HCT116 (cell line): ENCODE measurements at regions of chr11 and their contacts with region 1.

Region 1: DNA sequence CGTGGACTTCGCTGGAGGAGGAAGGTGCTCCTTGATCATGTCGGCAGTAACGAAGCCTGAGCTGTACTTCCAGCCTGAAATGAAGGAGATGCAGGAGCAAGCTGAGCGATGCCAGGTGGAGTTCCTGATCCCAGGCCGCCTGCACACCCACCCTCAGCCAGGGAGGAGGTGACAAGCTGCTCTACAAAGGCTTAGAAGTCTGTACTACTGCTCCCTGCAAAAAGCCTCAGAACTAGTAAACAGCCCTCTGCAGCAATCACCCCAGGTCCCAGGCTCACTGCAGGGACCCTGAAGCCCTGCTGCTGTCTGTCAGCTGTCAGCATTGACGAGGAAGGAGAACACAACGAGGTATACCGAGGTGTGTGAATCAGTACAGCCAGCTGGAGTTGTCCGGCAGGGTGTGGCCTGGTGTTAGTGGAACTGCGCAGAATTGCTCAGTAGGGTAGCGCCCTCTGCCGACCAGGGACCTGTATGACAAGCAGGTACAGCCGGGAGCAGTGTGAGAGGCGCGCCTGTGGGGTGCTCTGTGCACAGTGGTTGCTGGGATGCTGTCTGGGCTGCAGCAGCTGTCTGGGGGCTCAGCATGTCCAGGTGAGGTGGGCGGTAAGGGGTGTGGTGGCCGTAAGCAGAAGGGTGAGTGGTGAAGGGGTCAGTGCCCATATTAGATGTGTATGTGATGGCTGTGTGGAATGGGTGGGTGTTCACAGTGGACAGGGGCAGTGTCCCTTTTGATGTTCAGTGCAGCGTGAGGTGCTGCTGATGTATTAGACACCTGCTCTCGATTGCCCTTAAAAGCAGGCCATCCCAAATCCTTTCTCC is 7.6 kb downstream of the CYB5R2 start:
- DNase-seq: peak; percentile 67
- ATAC-seq: peak; percentile 100
- H3K4me3 ChIP-seq: no peak overlapping the region
- H3K27ac ChIP-seq: no peak overlapping the region
- H3K4me1 ChIP-seq: peaks cover 2 to 4% of the 10 kb centered on the region in 2 experiments; a peak in 2 of 4 replicates
- H3K27me3 ChIP-seq: no peaks in the 10 kb centered on the region
- CTCF ChIP-seq: peak; percentile 84 to 93 (median 90)
- POLR2A ChIP-seq: no peak
- RAD21 ChIP-seq: peak; percentile 90

Region 2: GRCh38 chr11:7098235-7098832 is 567.3 kb before region 1 on chr11:
- CTCF ChIA-PET with region 1: interaction called, 4 read pairs
- POLR2A ChIA-PET with region 1: no interaction called
- RAD21 ChIA-PET with region 1: no interaction called
- intact Hi-C with region 1: loop called (anchors 5 kb)
- DNase-seq: peak; percentile 50
- ATAC-seq: peak; percentile 91
- H3K4me3 ChIP-seq: no peak overlapping the region
- H3K27ac ChIP-seq: no peak overlapping the region
- H3K4me1 ChIP-seq: no peaks in the 10 kb centered on the region
- H3K27me3 ChIP-seq: peaks cover 59% of the 10 kb centered on the region
- CTCF ChIP-seq: peak; percentile 46 to 74 (median 72)
- POLR2A ChIP-seq: no peak
- RAD21 ChIP-seq: peak; percentile 91

Region 3: DNA sequence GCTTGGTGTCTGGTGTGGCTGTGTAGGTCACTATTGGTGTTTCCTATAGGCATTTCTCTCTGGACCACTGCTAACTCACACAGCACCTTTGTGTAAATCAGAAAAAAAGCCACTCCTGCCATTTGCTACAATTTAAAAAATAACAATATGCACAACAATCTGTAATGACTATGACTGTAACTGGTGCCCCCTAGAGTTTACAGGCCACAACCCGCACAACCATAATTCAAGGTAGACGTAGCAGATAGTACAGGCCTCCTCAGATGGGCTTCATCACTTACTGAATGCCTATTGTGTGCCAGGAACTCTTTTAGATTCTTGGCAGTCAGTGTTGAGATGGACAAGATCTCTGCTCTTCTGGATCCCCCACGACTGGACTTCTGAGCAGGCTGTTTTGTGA is 366.3 kb before region 1 on chr11:
- CTCF ChIA-PET with region 1: no interaction called
- POLR2A ChIA-PET with region 1: no interaction called
- RAD21 ChIA-PET with region 1: no interaction called
- intact Hi-C with region 1: no loop called
- DNase-seq: no peak
- ATAC-seq: peak; percentile 50
- H3K4me3 ChIP-seq: no peak overlapping the region
- H3K27ac ChIP-seq: no peak overlapping the region
- H3K4me1 ChIP-seq: no peaks in the 10 kb centered on the region
- H3K27me3 ChIP-seq: no peaks in the 10 kb centered on the region; the same call in 1 of the 2 replicates
- CTCF ChIP-seq: peak in 1 of 3 experiments; percentile 25; a peak in 1 of 6 replicates
- POLR2A ChIP-seq: no peak
- RAD21 ChIP-seq: no peak

Region 4: GRCh38 chr11:7353100-7353499 is 312.6 kb before region 1 on chr11:
- CTCF ChIA-PET with region 1: interaction called, 13 read pairs
- POLR2A ChIA-PET with region 1: no interaction called
- RAD21 ChIA-PET with region 1: no interaction called
- intact Hi-C with region 1: loop called (anchors 5 kb)
- DNase-seq: peak; percentile 22
- ATAC-seq: peak; percentile 85
- H3K4me3 ChIP-seq: no peak overlapping the region
- H3K27ac ChIP-seq: no peak overlapping the region
- H3K4me1 ChIP-seq: no peaks in the 10 kb centered on the region
- H3K27me3 ChIP-seq: peaks cover 55% of the 10 kb centered on the region
- CTCF ChIP-seq: peak; percentile 49 to 63 (median 57); a peak in 5 of 6 replicates
- POLR2A ChIP-seq: no peak
- RAD21 ChIP-seq: peak; percentile 53

Region 5: DNA sequence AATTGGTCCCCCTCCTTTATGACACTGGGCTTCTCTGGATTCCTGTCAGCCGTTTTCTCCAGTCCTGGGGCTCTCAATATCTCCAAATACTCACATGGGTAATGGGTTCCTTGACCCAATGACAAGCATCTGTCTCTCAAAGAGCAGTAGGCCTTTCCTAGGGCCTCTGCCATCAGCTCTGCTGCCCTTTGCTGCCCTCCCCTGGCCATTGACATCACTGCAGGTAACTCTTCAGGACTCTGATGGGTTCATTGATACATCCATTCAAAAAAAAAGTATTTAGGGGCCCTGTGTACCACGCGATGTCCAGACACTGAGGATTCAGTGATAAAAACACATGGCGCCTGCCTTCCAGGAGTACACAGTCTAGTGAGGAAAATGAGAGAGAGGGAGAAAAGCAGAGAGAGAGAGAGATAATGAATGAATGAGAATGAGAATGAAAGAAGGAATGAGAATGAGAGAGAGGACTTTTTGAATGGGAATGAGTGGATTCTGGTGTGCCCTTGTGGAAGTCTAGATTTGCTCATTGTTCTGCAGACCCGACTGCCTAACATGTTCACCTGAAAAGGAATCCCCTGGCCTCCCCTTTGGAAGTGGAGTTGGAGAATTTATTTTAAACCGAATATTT is 223.0 kb before region 1 on chr11:
- CTCF ChIA-PET with region 1: interaction called, 3 read pairs
- POLR2A ChIA-PET with region 1: no interaction called
- RAD21 ChIA-PET with region 1: no interaction called
- intact Hi-C with region 1: loop called (anchors 5 kb)
- DNase-seq: peak; percentile 38
- ATAC-seq: peak; percentile 90
- H3K4me3 ChIP-seq: no peak overlapping the region
- H3K27ac ChIP-seq: no peak overlapping the region
- H3K4me1 ChIP-seq: no peaks in the 10 kb centered on the region
- H3K27me3 ChIP-seq: peaks cover 73% of the 10 kb centered on the region
- CTCF ChIP-seq: peak; percentile 53 to 86 (median 85); a peak in 5 of 6 replicates
- POLR2A ChIP-seq: no peak
- RAD21 ChIP-seq: peak; percentile 78

Region 6: DNA sequence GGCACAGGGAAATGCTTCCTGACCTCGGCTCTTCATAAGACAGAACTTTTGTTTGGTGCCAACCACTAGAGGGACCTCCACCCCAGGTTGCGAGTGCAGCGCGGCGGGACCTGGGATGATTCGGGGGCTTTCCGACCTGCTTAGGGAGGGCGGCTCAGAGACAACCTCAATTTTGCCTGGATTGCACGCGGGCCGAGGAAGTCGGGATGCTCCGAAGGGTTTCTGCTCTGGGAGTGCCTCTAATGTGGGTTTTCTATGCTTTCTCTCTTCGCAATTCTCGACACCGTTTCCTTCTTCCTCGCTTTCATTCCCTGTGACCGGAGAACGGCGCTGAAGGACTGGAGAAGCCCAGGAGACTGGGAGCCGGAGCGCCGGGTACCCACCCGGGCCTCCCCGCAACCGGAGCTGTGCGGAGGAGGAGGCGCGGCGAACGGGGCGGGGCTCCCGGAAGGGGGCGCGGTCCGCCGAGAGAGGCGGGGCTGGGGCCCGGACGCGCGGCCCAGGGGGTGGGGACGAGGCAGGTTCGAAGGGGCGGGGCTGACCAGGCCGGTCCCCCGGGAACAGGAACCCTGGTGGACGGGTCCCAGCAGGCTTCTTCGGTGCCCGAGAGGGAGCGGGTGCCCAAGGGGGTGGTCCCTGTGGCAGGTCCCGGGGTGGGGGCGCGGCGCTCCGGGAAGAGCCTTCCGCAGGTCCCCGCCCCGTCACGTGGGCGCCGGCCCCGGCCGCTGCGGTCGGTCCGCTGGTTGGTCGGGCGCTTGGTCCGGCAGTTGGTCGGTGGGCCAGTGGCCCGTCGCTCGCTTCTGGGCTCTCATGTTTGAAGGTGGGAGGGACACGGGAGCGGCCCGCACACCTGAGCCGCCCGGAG is 152.2 kb before region 1 on chr11 and contains the start of gene PPFIBP2:
- CTCF ChIA-PET with region 1: no interaction called
- POLR2A ChIA-PET with region 1: no interaction called
- RAD21 ChIA-PET with region 1: interaction called in 1 of 2 experiments, 3 read pairs
- intact Hi-C with region 1: loop called (anchors 5 kb)
- DNase-seq: peak; percentile 40
- ATAC-seq: peak; percentile 92
- H3K4me3 ChIP-seq: peak within 1 kb of the TSS; percentile 54 to 74
- H3K27ac ChIP-seq: peak within 1 kb of the TSS; percentile 63; the same call in 1 of the 2 replicates
- H3K4me1 ChIP-seq: peaks cover 8 to 19% of the 10 kb centered on the region in 2 experiments; a peak in 3 of 4 replicates
- H3K27me3 ChIP-seq: no peaks in the 10 kb centered on the region; the same call in 1 of the 2 replicates
- CTCF ChIP-seq: peak; percentile 67 to 74 (median 67); a peak in 5 of 6 replicates
- POLR2A ChIP-seq: no peak
- RAD21 ChIP-seq: peak; percentile 65
- total RNA-seq, gene PPFIBP2: 5.7 TPM

Region 7: GRCh38 chr11:7548659-7549274 is 116.9 kb before region 1 on chr11:
- CTCF ChIA-PET with region 1: interaction called, 16 read pairs
- POLR2A ChIA-PET with region 1: no interaction called
- RAD21 ChIA-PET with region 1: interaction called in 1 of 2 experiments, 3 read pairs
- intact Hi-C with region 1: loop called (anchors 1 kb)
- DNase-seq: peak; percentile 16
- ATAC-seq: peak; percentile 99
- H3K4me3 ChIP-seq: no peak overlapping the region
- H3K27ac ChIP-seq: no peak overlapping the region
- H3K4me1 ChIP-seq: no peaks in the 10 kb centered on the region
- H3K27me3 ChIP-seq: no peaks in the 10 kb centered on the region
- CTCF ChIP-seq: peak; percentile 67 to 80 (median 73); a peak in 5 of 6 replicates
- POLR2A ChIP-seq: no peak
- RAD21 ChIP-seq: peak; percentile 61

Region 8: GRCh38 chr11:7571640-7572000 is 94.1 kb before region 1 on chr11:
- CTCF ChIA-PET with region 1: interaction called, 26 read pairs
- POLR2A ChIA-PET with region 1: no interaction called
- RAD21 ChIA-PET with region 1: interaction called, 8 read pairs
- intact Hi-C with region 1: loop called (anchors 1 kb)
- DNase-seq: peak; percentile 51
- ATAC-seq: peak; percentile 91
- H3K4me3 ChIP-seq: no peak overlapping the region
- H3K27ac ChIP-seq: no peak overlapping the region
- H3K4me1 ChIP-seq: peaks cover 16 to 25% of the 10 kb centered on the region in 2 experiments
- H3K27me3 ChIP-seq: no peaks in the 10 kb centered on the region
- CTCF ChIP-seq: peak; percentile 91 to 94 (median 92)
- POLR2A ChIP-seq: no peak
- RAD21 ChIP-seq: peak; percentile 95